ENCODE measurements at regions of chr7 and their contacts with region 1.

Region 1: GRCh38 chr7:7566651-7567611 is at the start of gene MIOS:
- DNase-seq: peak; percentile 73 to 88 (median 83)
- ATAC-seq: peak; percentile 95
- H3K4me3 ChIP-seq: peak within 1 kb of the TSS; percentile 77
- H3K4me3 Mint-ChIP-seq: peak within 1 kb of the TSS in 9 of 10 donors; percentile 75 to 92 (median 86)
- H3K27ac ChIP-seq: peak within 1 kb of the TSS; percentile 98
- H3K27ac Mint-ChIP-seq: peak within 1 kb of the TSS; percentile 80 to 91 (median 85)
- H3K4me1 ChIP-seq: peaks cover 27 to 29% of the 10 kb centered on the region in 2 donors
- H3K4me1 Mint-ChIP-seq: peaks cover 21 to 41% (median 37%) of the 10 kb centered on the region in 7 donors
- H3K27me3 ChIP-seq: no peaks in the 10 kb centered on the region
- H3K27me3 Mint-ChIP-seq: no peaks in the 10 kb centered on the region
- total RNA-seq, gene MIOS: 24.3 to 31.7 (median 28.7) TPM

Region 2: GRCh38 chr7:6272481-6273323 is 1294.2 kb before region 1 on chr7 and contains the start of gene CYTH3:
- CTCF ChIA-PET with region 1: no interaction called
- POLR2A ChIA-PET with region 1: no interaction called
- intact Hi-C with region 1: loop called in 1 of 2 experiments (anchors 5 kb)
- DNase-seq: peak; percentile 47 to 92 (median 74)
- ATAC-seq: peak; percentile 97
- H3K4me3 ChIP-seq: peak within 1 kb of the TSS; percentile 69
- H3K4me3 Mint-ChIP-seq: peak within 1 kb of the TSS; percentile 79 to 96 (median 92)
- H3K27ac ChIP-seq: peak within 1 kb of the TSS; percentile 46
- H3K27ac Mint-ChIP-seq: peak within 1 kb of the TSS in 7 of 9 donors; percentile 31 to 83 (median 67)
- H3K4me1 ChIP-seq: peaks cover 10 to 18% of the 10 kb centered on the region in 2 donors
- H3K4me1 Mint-ChIP-seq: peaks cover 15 to 30% (median 19%) of the 10 kb centered on the region in 7 donors
- H3K27me3 ChIP-seq: no peaks in the 10 kb centered on the region
- H3K27me3 Mint-ChIP-seq: peaks cover 0 to 64% (median 12%) of the 10 kb centered on the region in 5 donors
- total RNA-seq, gene CYTH3: 0.99 to 9.5 (median 3.6) TPM

Region 3: GRCh38 chr7:6577365-6578113 is 989.4 kb before region 1 on chr7 and contains the start of gene ZDHHC4:
- CTCF ChIA-PET with region 1: no interaction called
- POLR2A ChIA-PET with region 1: no interaction called
- intact Hi-C with region 1: loop called in 1 of 2 experiments (anchors 5 kb)
- DNase-seq: peak; percentile 75 to 90 (median 83)
- ATAC-seq: peak; percentile 97
- H3K4me3 ChIP-seq: peak within 1 kb of the TSS; percentile 76
- H3K4me3 Mint-ChIP-seq: peak within 1 kb of the TSS; percentile 83 to 91 (median 89)
- H3K27ac ChIP-seq: peak within 1 kb of the TSS; percentile 99
- H3K27ac Mint-ChIP-seq: peak within 1 kb of the TSS; percentile 83 to 96 (median 93)
- H3K4me1 ChIP-seq: no peaks in the 10 kb centered on the region
- H3K4me1 Mint-ChIP-seq: peaks cover 0 to 29% (median 16%) of the 10 kb centered on the region in 7 donors
- H3K27me3 ChIP-seq: no peaks in the 10 kb centered on the region
- H3K27me3 Mint-ChIP-seq: peaks cover 0 to 3% (median 0%) of the 10 kb centered on the region in 5 donors
- total RNA-seq, gene ZDHHC4: 25.2 to 42.2 (median 31.8) TPM

Region 4: GRCh38 chr7:7157177-7157886 is 409.6 kb before region 1 on chr7:
- CTCF ChIA-PET with region 1: no interaction called
- POLR2A ChIA-PET with region 1: interaction called, 3 read pairs
- intact Hi-C with region 1: loop called in 1 of 2 experiments (anchors 2 kb)
- DNase-seq: peak; percentile 16 to 89 (median 83)
- ATAC-seq: peak; percentile 97
- H3K4me3 ChIP-seq: peak overlapping the region; percentile 51
- H3K4me3 Mint-ChIP-seq: peak overlapping the region; percentile 51 to 90 (median 79)
- H3K27ac ChIP-seq: peak overlapping the region; percentile 67
- H3K27ac Mint-ChIP-seq: peak overlapping the region; percentile 81 to 99 (median 92)
- H3K4me1 ChIP-seq: peaks cover 34 to 46% of the 10 kb centered on the region in 2 donors
- H3K4me1 Mint-ChIP-seq: peaks cover 40 to 82% (median 73%) of the 10 kb centered on the region in 7 donors
- H3K27me3 ChIP-seq: no peaks in the 10 kb centered on the region
- H3K27me3 Mint-ChIP-seq: no peaks in the 10 kb centered on the region

Region 5: DNA sequence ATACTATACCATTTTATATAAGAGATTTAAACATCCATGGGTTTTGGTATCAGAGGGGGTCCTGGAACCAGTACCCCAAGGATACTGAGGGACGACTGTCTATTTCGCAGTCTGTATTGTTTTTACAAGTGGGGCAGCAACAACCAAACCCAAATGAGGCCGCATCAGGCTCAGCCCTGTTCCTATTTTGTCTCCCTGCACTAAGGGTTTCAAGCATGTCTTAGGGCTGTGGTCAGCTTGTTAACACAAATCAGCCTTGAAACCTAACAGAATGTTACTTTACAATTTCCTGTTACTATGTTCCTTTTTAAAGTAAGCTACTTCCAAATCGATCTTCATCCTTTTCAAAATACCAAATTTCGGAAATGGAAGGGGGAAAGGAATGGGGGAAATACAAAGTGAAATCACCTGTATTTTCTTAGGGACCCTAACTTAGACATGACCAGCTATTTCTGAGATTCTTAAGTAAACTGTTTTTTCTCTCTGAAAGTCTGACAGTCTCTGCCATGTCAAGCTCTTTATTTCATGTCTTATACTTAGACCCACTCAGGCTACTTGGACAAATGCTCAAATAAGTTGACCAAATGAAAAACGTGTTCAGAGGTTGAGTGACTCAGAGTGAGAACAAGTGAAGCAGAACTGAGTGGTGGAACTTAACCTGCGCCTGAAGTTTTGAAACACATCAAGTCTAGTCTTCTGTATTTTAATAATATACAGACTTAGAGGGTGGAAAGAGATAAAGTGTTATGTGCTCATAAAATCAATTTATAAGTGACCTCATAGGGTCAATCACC is 308.8 kb before region 1 on chr7:
- CTCF ChIA-PET with region 1: no interaction called
- POLR2A ChIA-PET with region 1: interaction called, 3 read pairs
- intact Hi-C with region 1: loop called in 1 of 2 experiments (anchors 2 kb)
- DNase-seq: no peak
- ATAC-seq: peak; percentile 60
- H3K4me3 ChIP-seq: no peak overlapping the region
- H3K4me3 Mint-ChIP-seq: peak overlapping the region; percentile 46 to 78 (median 71)
- H3K27ac ChIP-seq: peak overlapping the region; percentile 62
- H3K27ac Mint-ChIP-seq: peak overlapping the region; percentile 70 to 92 (median 86)
- H3K4me1 ChIP-seq: peaks cover 14 to 19% of the 10 kb centered on the region in 2 donors
- H3K4me1 Mint-ChIP-seq: peaks cover 10 to 64% (median 49%) of the 10 kb centered on the region in 7 donors
- H3K27me3 ChIP-seq: no peaks in the 10 kb centered on the region
- H3K27me3 Mint-ChIP-seq: no peaks in the 10 kb centered on the region

Region 6: DNA sequence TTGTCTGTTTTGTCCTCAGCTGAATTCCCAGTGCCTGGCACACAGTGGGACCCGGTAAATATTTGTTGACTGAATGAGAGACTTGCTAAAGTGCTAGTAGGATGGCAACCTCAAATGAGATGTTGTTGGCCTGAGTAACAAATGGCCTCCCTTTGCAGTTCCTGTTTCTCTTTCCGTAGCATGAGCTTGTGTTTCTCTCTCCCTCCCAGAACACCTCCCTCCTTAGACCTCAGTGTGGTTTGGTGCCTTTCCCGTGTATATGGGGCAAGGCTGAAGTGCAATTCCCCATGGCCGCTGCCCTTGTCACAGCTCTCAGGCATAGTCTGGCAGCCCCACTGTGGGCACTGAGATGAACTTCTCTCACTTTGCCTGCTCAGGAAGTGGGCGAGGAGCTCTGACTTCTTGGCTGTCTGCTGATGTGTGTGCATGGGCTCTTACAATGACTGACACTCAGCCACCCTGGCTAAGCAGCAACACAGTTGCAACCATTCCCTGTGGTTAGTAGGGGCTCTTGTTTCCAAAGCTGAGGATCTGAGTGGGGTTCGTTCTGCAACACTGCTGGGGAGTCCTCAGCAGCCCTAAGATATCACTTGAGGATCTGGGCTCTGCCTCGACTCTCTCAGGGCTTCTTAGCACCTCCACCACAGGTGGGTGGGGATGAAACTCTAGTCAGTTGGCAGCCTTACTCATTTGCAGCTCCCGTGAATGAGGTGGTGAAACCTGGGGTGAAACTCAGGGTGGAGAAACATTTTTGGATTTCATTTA is 558.9 kb after region 1 on chr7:
- CTCF ChIA-PET with region 1: no interaction called
- POLR2A ChIA-PET with region 1: no interaction called
- intact Hi-C with region 1: loop called in 1 of 2 experiments (anchors 5 kb)
- DNase-seq: peak; percentile 47 to 83 (median 77)
- ATAC-seq: peak; percentile 95
- H3K4me3 ChIP-seq: peak overlapping the region; percentile 9
- H3K4me3 Mint-ChIP-seq: peak overlapping the region; percentile 59 to 83 (median 75)
- H3K27ac ChIP-seq: peak overlapping the region; percentile 70
- H3K27ac Mint-ChIP-seq: peak overlapping the region; percentile 92 to 100 (median 99)
- H3K4me1 ChIP-seq: peaks cover 56 to 69% of the 10 kb centered on the region in 2 donors
- H3K4me1 Mint-ChIP-seq: peaks cover 56 to 88% (median 77%) of the 10 kb centered on the region in 7 donors
- H3K27me3 ChIP-seq: no peaks in the 10 kb centered on the region
- H3K27me3 Mint-ChIP-seq: no peaks in the 10 kb centered on the region

Region 7: GRCh38 chr7:8134089-8134733 is 567.3 kb after region 1 on chr7:
- CTCF ChIA-PET with region 1: no interaction called
- POLR2A ChIA-PET with region 1: no interaction called
- intact Hi-C with region 1: loop called (anchors 1 to 5 kb)
- DNase-seq: peak in 8 of 9 donors; percentile 25 to 51 (median 44)
- ATAC-seq: peak; percentile 32
- H3K4me3 ChIP-seq: peak overlapping the region; percentile 7
- H3K4me3 Mint-ChIP-seq: peak overlapping the region; percentile 25 to 82 (median 61)
- H3K27ac ChIP-seq: peak overlapping the region; percentile 47
- H3K27ac Mint-ChIP-seq: peak overlapping the region; percentile 78 to 98 (median 94)
- H3K4me1 ChIP-seq: peaks cover 45 to 50% of the 10 kb centered on the region in 2 donors
- H3K4me1 Mint-ChIP-seq: peaks cover 38 to 65% (median 56%) of the 10 kb centered on the region in 7 donors
- H3K27me3 ChIP-seq: no peaks in the 10 kb centered on the region
- H3K27me3 Mint-ChIP-seq: no peaks in the 10 kb centered on the region